ENCODE measurements at regions of chr17 and their contacts with region 1.

Region 1: GRCh38 chr17:79874329-79874981 is 35.2 kb upstream of the CBX4 start:
- DNase-seq: peak; percentile 26
- H3K4me3 ChIP-seq: no peak overlapping the region
- H3K27ac ChIP-seq: no peak overlapping the region
- H3K4me1 ChIP-seq: no peaks in the 10 kb centered on the region
- H3K27me3 ChIP-seq: no peaks in the 10 kb centered on the region
- CTCF ChIP-seq: peak; percentile 50 to 51

Region 2: DNA sequence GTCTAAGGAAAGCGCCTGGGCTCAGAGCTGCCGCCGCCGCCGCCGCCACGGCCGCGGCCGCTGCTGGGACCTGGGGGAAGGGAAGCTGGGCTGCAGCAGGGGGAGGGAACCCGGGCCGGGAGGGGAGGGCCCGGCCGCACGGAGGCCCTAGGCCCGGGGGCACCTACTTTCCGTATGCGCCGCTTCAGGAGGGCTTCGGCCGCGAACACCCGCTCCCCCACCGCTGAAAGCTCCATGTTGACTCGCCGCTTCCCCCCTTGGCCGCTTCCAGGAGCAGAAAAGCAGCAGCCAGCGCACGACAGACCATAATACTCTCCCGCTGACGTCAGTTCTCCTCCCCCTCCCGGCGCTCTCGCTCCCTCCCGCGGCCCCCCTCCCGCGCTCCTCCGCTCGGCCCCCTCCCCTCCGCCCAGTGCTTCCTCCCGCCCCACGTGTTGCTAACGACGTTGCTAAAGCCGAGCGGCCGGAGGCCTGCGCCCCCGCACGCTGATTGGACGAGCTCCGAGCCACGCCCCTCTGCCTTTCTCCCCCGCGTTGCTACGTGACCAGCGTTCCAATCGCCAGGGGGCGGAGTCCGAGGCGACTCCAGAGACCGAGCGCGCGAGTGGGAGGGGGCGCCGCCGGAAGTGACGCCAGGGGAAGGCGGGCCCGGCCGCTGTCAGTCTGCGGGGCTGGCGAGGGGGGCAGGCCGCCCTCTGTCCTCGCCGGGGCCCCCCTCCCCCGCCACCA is 77.5 kb before region 1 on chr17 and contains the start of gene CBX8:
- CTCF ChIA-PET with region 1: no interaction called
- dilution Hi-C with region 1: no loop called
- in situ Hi-C with region 1: no loop called
- intact Hi-C with region 1: no loop called
- DNase-seq: peak; percentile 99
- H3K4me3 ChIP-seq: peak within 1 kb of the TSS; percentile 67 to 75 (median 73)
- H3K27ac ChIP-seq: peak within 1 kb of the TSS; percentile 87
- H3K4me1 ChIP-seq: peaks cover 39% of the 10 kb centered on the region
- H3K27me3 ChIP-seq: peaks cover 31% of the 10 kb centered on the region
- CTCF ChIP-seq: peak in 1 of 2 donors; percentile 18
- total RNA-seq, gene CBX8: 4.5 to 5.4 TPM

Region 3: GRCh38 chr17:79810130-79811010 is 64.1 kb before region 1 on chr17:
- CTCF ChIA-PET with region 1: no interaction called
- dilution Hi-C with region 1: no loop called
- in situ Hi-C with region 1: no loop called
- intact Hi-C with region 1: no loop called
- DNase-seq: peak; percentile 80
- H3K4me3 ChIP-seq: peak overlapping the region in 2 of 3 experiments; percentile 9 to 42
- H3K27ac ChIP-seq: no peak overlapping the region
- H3K4me1 ChIP-seq: peaks cover 40% of the 10 kb centered on the region
- H3K27me3 ChIP-seq: peaks cover 25% of the 10 kb centered on the region
- CTCF ChIP-seq: no peak

Region 4: DNA sequence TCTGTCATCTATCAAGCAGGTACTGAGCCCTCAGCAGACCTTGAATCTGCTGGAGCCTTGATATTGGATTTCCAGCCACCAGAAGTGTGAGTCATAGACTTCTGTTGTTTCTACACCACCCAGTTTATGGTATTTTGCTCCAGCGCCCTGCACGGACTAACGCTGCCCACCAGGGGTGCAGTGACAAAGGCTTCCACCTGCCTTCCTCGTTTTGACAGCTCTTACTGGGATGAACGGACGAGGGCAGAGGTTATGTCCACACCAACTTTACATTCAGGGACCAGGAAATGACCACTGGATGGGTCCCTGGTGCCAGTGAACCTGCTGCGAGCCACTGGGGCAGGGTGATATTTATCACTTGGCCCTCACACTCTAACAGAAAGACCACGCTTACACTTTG is 31.4 kb after region 1 on chr17:
- CTCF ChIA-PET with region 1: no interaction called
- dilution Hi-C with region 1: no loop called
- in situ Hi-C with region 1: no loop called
- intact Hi-C with region 1: no loop called
- DNase-seq: no peak
- H3K4me3 ChIP-seq: no peak overlapping the region
- H3K27ac ChIP-seq: no peak overlapping the region
- H3K4me1 ChIP-seq: no peaks in the 10 kb centered on the region
- H3K27me3 ChIP-seq: peaks cover 2% of the 10 kb centered on the region
- CTCF ChIP-seq: no peak

Region 5: GRCh38 chr17:79923974-79924638 is 49.7 kb after region 1 on chr17:
- CTCF ChIA-PET with region 1: no interaction called
- dilution Hi-C with region 1: loop called (anchors 10 kb)
- in situ Hi-C with region 1: no loop called
- intact Hi-C with region 1: no loop called
- DNase-seq: no peak
- H3K4me3 ChIP-seq: no peak overlapping the region
- H3K27ac ChIP-seq: no peak overlapping the region
- H3K4me1 ChIP-seq: peaks cover 22% of the 10 kb centered on the region
- H3K27me3 ChIP-seq: no peaks in the 10 kb centered on the region
- CTCF ChIP-seq: peak; percentile 46 to 49

Region 6: DNA sequence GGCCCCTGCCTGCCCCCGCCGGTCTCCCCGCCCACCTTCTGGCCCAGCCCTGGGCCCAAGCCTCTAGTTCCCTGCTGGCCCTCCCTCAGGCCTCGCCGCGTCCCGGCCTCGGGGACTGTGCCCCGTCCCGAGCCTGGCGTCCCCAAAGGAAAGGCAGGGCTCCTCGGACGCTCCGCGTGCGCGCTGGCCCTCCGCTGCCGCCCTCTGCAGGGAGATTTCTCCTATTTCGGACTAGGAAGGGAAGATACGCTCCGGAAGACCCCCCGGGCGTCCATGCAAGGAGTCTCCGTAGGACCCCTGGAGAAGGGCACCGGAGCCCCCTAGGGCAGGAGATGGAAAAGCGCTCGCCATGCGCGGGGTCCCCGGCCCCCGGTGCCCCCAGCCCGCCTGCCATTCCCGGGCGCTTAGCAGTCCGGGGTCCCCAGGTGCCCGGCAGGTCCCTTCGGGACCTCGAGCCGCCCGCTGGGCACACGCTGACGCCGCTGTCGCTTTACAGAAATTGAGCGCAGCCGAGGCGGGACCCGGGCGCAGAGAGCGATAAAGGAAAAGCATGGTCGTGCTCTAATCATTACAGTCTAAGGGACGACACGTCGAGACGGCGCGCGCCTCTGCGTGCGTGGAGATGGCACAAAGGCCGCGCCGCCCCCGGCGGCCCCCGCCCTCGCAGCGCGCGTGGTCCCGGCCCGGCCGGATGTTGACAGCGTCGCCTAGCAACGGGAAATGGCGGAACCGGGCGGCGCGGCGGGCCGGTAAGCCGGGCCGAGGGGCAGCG is 161.7 kb after region 1 on chr17 and contains the start of gene CCDC40:
- CTCF ChIA-PET with region 1: no interaction called
- dilution Hi-C with region 1: no loop called
- in situ Hi-C with region 1: no loop called
- intact Hi-C with region 1: no loop called
- DNase-seq: peak; percentile 68
- H3K4me3 ChIP-seq: peak within 1 kb of the TSS; percentile 70 to 83 (median 77)
- H3K27ac ChIP-seq: peak within 1 kb of the TSS; percentile 58
- H3K4me1 ChIP-seq: peaks cover 10% of the 10 kb centered on the region
- H3K27me3 ChIP-seq: no peaks in the 10 kb centered on the region
- CTCF ChIP-seq: peak in 1 of 2 donors; percentile 33
- total RNA-seq, gene CCDC40: 2.7 to 3.0 TPM